ENCODE measurements at regions of chr11 and their contacts with region 1.

Region 1: DNA sequence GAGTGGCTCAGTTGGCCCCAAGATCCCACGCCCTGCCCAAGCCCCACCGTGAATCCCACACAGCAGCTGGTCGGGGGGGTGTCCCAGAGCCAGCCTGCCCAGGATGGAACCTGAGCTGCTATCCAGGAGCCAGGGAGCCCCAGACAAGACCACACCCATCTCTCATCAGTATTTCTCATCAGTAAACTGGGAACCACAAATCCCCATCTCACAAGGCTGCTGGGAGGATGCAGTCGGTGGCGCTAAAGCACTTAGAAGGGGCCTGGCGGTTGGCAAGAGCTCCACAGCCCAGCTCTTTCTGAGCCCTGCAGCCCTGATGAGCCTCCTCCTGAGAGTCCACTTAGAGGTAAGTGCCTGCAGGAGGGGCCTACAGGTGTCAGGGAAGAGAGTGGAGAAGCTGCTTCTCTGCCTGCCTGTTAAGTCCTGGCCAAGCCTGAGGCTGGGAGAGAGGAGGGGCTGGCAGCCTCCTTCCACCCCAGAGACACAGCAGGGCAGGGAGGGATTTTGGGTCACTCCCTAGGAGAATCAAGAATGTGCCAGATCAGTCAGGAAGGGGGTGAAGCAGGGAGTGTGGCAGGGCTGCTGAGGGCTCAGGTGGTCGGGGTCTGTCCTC is 6.1 kb downstream of the FADS3 start:
- DNase-seq: no peak
- H3K4me3 ChIP-seq: no peak overlapping the region
- H3K27ac ChIP-seq: no peak overlapping the region
- H3K4me1 ChIP-seq: peaks cover 36% of the 10 kb centered on the region
- H3K27me3 ChIP-seq: no peaks in the 10 kb centered on the region
- CTCF ChIP-seq: no peak
- POLR2A ChIP-seq: no peak

Region 2: GRCh38 chr11:61871158-61871597 is 14.1 kb before region 1 on chr11:
- CTCF ChIA-PET with region 1: interaction called, 23 read pairs
- POLR2A ChIA-PET with region 1: interaction called, 8 read pairs
- dilution Hi-C with region 1: no loop called
- intact Hi-C with region 1: loop called (anchors 1 kb)
- DNase-seq: peak; percentile 76
- H3K4me3 ChIP-seq: no peak overlapping the region
- H3K27ac ChIP-seq: no peak overlapping the region
- H3K4me1 ChIP-seq: peaks cover 12% of the 10 kb centered on the region
- H3K27me3 ChIP-seq: no peaks in the 10 kb centered on the region
- CTCF ChIP-seq: peak; percentile 95 to 99
- POLR2A ChIP-seq: no peak

Measured in endothelial cell of umbilical vein (primary cell).